ENCODE measurements at regions of chr5 and their contacts with region 1.

Region 1: DNA sequence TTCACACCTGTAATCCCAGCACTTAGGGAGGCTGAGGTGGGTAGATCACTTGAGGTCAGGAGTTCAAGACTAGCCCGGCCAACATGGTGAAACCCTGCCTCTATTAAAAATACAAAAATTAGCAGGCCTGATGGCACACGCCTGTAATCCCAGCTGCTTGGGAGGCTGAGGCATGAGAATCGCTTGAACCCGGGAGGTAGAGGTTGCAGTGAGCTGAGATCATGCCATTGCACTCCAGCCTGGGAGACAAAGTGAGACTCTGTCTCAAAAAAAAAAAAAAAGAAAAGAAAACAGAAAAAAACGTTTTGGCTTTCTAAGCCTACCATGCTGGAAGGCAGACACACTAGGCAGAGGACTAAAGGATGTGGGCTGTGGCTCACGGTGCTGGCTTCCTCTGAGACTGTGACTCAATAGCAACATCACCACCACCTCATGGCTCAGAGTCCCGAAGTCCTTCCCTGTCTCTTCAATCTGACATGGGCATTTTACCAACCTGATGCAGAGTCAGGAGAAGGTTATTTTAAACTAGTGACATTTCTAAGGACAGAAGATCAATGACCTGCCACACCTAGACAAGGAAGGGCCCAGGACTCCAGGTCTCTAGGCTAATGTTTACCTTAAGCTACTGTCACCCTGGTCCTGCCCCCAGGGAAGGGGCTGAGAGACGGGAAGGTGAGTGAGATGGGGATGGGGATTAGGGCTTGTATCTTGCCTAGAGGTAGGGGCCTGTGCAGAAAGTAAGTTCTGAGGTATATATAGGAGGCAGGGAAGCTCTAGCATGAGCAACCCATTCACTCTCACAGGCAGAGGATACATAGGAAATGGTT is 3.8 kb downstream of the ECSCR start:
- DNase-seq: no peak
- H3K27ac ChIP-seq: no peak overlapping the region
- CTCF ChIP-seq: no peak

Region 2: GRCh38 chr5:139422307-139422893 is 36.4 kb before region 1 on chr5:
- CTCF ChIA-PET with region 1: no interaction called
- POLR2A ChIA-PET with region 1: no interaction called
- DNase-seq: peak; percentile 84
- H3K27ac ChIP-seq: no peak overlapping the region
- CTCF ChIP-seq: peak; percentile 97

Region 3: DNA sequence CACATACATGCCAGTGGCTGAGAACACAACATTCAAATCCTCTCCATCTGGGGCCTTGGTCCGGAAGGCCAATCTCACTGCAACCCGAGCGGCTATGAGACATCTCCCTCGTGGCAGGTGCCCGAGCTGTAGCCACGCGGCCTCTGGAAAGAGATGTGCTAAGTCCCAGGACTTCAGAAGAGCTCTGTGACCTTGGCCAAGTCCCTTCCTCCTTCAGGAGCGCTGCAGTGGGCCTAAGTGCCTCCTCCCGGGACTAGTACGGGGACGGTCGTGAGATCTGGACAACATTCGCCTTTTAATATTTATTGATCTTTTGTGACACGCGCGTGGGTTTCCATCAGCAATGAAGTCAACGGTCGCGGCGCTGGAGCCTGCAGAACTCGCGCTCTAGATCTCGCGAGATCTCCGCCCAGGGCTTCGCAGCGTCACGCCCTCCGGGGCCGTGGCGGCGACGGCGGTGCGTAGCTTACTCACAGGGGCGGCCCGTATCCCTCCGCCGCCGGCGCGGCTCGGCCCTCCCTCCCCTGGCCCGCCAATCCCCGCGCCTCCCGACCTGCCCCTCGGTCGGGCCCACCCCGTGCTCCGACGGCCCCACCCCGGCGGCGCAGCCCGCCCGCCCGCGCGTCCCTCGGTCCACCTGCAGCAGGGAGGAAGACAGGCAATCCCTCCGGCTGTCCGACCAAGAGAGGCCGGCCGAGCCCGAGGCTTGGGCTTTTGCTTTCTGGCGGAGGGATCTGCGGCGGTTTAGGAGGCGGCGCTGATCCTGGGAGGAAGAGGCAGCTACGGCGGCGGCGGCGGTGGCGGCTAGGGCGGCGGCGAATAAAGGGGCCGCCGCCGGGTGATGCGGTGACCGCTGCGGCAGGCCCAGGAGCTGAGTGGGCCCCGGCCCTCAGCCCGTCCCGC is 102.2 kb after region 1 on chr5 and contains the start of gene UBE2D2:
- CTCF ChIA-PET with region 1: no interaction called
- POLR2A ChIA-PET with region 1: interaction called, 12 read pairs
- DNase-seq: peak; percentile 99
- H3K27ac ChIP-seq: peak within 1 kb of the TSS; percentile 96
- CTCF ChIP-seq: no peak